Prostate gland (tissue), 2 donors: ENCODE measurements at regions of chr5 and their contacts with region 1.

Region 1: GRCh38 chr5:142769741-142770631 is at the start of gene ARHGAP26:
- DNase-seq: peak; percentile 99
- H3K4me3 ChIP-seq: peak within 1 kb of the TSS; percentile 74 to 77
- H3K27ac ChIP-seq: peak within 1 kb of the TSS; percentile 84 to 85
- H3K4me1 ChIP-seq: no peaks in the 10 kb centered on the region
- H3K27me3 ChIP-seq: no peaks in the 10 kb centered on the region
- CTCF ChIP-seq: peak in 1 of 4 experiments; percentile 28
- POLR2A ChIP-seq: peak; percentile 100
- total RNA-seq, gene ARHGAP26: 11.7 to 39.8 TPM

Region 2: GRCh38 chr5:142215915-142216681 is 553.9 kb before region 1 on chr5:
- intact Hi-C with region 1: no loop called
- DNase-seq: peak; percentile 82
- H3K4me3 ChIP-seq: no peak overlapping the region
- H3K27ac ChIP-seq: peak overlapping the region; percentile 48 to 74
- H3K4me1 ChIP-seq: peaks cover 9% of the 10 kb centered on the region
- H3K27me3 ChIP-seq: no peaks in the 10 kb centered on the region
- CTCF ChIP-seq: peak in 1 of 4 experiments; percentile 13
- POLR2A ChIP-seq: no peak

Region 3: DNA sequence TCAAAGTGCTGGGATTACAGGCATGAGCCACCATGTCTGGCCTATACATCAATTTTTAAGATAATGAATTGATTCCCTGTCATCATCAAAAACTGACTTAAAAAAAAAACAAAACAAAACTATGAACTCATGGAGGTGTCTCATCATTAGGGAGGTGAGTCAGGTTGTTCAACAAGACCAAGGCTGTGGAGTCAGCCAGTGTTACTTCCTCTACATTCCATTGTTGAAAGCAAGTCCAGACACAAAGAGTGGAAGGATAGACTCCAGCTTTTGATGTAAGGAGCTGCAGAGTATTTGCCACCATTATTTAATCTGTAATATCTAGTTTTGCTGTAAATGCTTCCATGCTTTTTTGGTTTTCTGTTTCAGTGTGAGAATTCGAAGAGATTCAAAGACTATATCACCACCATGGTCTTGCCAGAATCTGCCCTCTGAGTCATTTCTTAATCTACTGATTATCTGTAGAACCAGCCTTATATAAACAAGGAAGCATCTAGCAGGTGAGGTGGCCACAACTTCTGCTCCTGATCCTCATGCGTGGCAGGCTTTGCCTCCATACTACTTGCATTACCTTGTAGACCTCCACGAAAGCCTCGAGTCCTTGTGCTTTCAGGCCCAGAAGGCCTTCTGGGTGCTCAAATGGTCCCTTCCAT is 240.2 kb before region 1 on chr5:
- intact Hi-C with region 1: no loop called
- DNase-seq: no peak
- H3K4me3 ChIP-seq: no peak overlapping the region
- H3K27ac ChIP-seq: no peak overlapping the region
- H3K4me1 ChIP-seq: no peaks in the 10 kb centered on the region
- H3K27me3 ChIP-seq: no peaks in the 10 kb centered on the region
- CTCF ChIP-seq: no peak
- POLR2A ChIP-seq: no peak

Region 4: DNA sequence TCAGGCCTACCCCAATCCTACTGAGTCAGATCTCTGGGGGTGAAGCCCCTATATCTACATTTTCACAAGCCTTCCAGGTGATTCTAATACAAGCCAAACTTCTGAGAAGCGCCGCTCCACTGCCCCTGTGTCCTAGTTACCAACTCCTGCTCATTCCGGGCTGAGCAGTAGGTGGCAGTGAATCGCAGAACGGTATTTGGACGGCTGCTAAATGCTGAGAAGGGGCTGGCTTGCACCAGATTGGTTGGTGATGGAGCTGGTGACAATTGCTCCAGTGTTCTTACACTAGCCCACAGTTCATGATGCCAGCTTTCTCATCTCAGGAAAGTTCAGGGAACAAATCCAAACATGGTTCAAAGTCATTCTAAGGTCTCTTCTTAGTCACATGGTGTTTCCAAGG is 53.0 kb before region 1 on chr5:
- intact Hi-C with region 1: loop called (anchors 5 kb)
- DNase-seq: peak; percentile 49
- H3K4me3 ChIP-seq: no peak overlapping the region
- H3K27ac ChIP-seq: no peak overlapping the region
- H3K4me1 ChIP-seq: no peaks in the 10 kb centered on the region
- H3K27me3 ChIP-seq: no peaks in the 10 kb centered on the region
- CTCF ChIP-seq: peak in 2 of 4 experiments; percentile 47 to 53
- POLR2A ChIP-seq: no peak

Region 5: GRCh38 chr5:142821733-142822487 is 51.9 kb after region 1 on chr5:
- intact Hi-C with region 1: loop called (anchors 10 kb)
- DNase-seq: no peak
- H3K4me3 ChIP-seq: no peak overlapping the region
- H3K27ac ChIP-seq: no peak overlapping the region
- H3K4me1 ChIP-seq: peaks cover 11% of the 10 kb centered on the region
- H3K27me3 ChIP-seq: no peaks in the 10 kb centered on the region
- CTCF ChIP-seq: no peak
- POLR2A ChIP-seq: no peak

Region 6: DNA sequence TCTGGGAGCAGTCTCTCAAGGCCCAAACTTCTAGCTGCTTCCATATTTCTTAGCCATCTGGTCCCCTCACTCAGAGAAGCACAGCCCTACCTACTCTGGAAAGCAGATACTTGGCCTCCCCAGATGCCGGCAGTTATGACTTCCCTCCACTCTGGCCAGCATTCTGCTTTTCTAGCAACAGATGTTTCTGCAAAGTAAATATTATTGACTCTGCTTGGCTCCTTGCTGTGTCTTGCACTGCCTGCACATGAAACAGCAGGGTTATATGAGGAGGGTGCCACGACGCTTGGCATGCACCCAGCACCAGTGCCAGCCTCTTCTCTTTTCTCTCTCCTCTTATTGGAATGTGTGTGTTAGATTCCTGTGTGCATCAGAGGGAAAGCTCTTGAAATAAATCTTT is 99.9 kb after region 1 on chr5:
- intact Hi-C with region 1: loop called (anchors 5 kb)
- DNase-seq: peak; percentile 76
- H3K4me3 ChIP-seq: no peak overlapping the region
- H3K27ac ChIP-seq: peak overlapping the region; percentile 32 to 43
- H3K4me1 ChIP-seq: peaks cover 11% of the 10 kb centered on the region
- H3K27me3 ChIP-seq: no peaks in the 10 kb centered on the region
- CTCF ChIP-seq: no peak
- POLR2A ChIP-seq: no peak